Lower leg skin (tissue), 4 donors: ENCODE measurements at regions of chr6 and their contacts with region 1.

Region 1: DNA sequence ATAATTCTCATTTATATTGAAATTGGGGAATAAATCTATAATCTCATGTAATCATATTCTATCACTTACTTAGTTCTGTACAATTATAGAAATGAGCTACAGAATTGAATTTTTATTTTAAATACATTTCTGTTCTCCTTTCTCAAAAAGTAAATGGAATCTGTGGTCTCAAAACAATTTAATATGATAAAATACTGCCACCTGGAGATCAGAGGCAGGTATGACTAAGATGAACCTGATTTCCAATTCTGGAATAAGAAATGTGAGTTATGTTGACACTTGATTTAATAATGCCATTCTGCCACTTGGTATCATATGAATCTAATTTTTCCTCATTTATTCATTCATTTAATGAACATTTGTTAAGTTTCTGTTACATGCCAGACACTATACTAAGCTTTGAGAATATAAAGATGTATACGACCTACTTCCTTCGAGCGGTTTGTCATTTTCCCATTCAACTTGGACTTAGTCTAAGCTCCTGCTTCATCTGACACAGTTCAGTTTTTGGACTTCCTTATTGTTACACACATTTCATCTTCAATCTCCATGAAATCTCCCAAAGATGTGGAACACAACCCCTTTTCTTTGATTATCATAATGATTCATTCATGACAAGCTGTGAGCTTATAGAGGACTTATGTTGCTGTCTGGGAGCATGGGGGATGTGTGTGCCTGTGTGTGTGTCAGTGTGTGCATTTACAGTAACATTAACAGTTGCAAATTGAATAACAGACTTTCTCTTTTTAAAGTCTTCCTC is 7.5 kb upstream of the CCDC28A start:
- DNase-seq: no peak
- H3K4me3 ChIP-seq: no peak overlapping the region
- CTCF ChIP-seq: no peak
- POLR2A ChIP-seq: no peak

Region 2: DNA sequence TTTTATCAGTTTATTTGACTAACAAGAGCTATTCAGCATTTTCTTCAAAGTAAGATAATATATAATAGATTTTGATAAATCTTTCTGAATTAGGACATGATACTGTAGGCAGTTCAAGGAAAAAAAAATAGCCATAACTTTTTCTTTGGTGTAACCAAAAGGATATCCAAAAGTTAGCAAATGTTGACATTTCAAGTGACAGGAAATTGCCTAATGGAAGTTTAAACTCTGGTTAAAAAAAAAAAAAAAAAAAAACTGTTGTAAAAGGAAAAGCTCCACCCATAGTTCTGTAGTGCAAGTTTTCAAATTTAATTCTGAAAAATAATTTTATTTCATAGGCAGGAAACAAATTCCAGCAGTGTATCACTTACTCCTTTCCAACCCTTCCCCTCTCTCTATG is 343.2 kb before region 1 on chr6:
- intact Hi-C with region 1: loop called (anchors 5 kb)
- DNase-seq: no peak
- H3K4me3 ChIP-seq: no peak overlapping the region
- CTCF ChIP-seq: no peak
- POLR2A ChIP-seq: no peak

Region 3: GRCh38 chr6:138509371-138509770 is 256.7 kb before region 1 on chr6:
- intact Hi-C with region 1: no loop called
- DNase-seq: no peak
- H3K4me3 ChIP-seq: no peak overlapping the region
- CTCF ChIP-seq: no peak
- POLR2A ChIP-seq: no peak

Region 4: DNA sequence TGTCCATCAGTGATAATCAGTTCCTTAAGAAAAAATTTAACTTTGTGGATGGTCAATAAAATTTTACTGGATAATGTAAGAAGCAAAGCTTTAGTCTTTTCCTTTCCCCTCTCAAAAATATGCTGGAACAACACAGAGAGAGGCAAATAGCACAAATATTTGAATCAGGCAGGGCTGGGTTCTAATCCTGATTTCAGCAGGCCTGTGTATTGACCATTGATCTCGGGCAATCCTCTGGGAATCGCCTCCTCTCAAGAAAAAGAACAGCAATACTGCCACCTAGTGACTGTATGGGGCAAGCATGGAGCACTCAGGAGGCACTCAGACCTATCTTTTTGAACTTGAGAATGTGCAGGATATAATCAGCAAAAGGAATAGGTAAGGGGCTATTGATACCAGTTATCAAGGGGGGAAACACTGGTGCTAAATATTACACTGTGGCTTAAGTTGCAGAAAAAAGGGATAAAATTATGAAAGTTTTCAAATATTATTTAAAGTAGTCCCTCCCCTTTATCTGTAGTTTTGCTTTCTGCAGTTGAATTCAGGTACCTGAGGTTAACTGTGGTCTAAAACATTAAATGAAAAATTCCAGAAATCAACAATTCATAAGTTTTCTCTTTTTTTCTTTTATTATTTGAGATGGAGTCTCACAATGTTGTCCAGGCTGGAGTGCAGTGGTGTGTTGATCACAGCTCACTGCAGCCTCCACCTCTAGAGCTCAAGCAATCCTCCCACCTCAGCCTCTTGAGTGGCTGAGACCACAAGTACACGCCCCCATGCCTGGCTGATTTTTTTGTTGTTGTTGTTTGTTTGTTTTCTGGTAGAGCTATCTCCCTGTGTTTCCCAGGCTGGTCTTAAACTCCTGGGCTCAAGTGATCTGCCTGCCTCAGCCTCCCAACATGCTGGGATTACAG is 175.0 kb before region 1 on chr6:
- intact Hi-C with region 1: loop called (anchors 2 kb)
- DNase-seq: peak in 1 of 2 donors; percentile 49
- H3K4me3 ChIP-seq: no peak overlapping the region
- CTCF ChIP-seq: peak in 1 of 3 donors; percentile 18
- POLR2A ChIP-seq: no peak